ENCODE measurements at regions of chr4 and their contacts with region 1.

Region 1: GRCh38 chr4:113761620-113762185 is at the start of gene CAMK2D:
- DNase-seq: peak; percentile 96
- H3K4me3 Mint-ChIP-seq: peak within 1 kb of the TSS; percentile 95
- H3K27ac Mint-ChIP-seq: peak within 1 kb of the TSS; percentile 99
- H3K4me1 Mint-ChIP-seq: peaks cover 37% of the 10 kb centered on the region
- H3K27me3 Mint-ChIP-seq: no peaks in the 10 kb centered on the region
- total RNA-seq, gene CAMK2D: 75.7 to 78.3 TPM

Region 2: GRCh38 chr4:112284662-112285411 is 1476.9 kb before region 1 on chr4:
- CTCF ChIA-PET with region 1: no interaction called
- intact Hi-C with region 1: loop called (anchors 10 kb)
- DNase-seq: no peak
- H3K4me3 Mint-ChIP-seq: peak overlapping the region; percentile 97
- H3K27ac Mint-ChIP-seq: peak overlapping the region; percentile 97
- H3K4me1 Mint-ChIP-seq: peaks cover 72% of the 10 kb centered on the region
- H3K27me3 Mint-ChIP-seq: no peaks in the 10 kb centered on the region

Region 3: DNA sequence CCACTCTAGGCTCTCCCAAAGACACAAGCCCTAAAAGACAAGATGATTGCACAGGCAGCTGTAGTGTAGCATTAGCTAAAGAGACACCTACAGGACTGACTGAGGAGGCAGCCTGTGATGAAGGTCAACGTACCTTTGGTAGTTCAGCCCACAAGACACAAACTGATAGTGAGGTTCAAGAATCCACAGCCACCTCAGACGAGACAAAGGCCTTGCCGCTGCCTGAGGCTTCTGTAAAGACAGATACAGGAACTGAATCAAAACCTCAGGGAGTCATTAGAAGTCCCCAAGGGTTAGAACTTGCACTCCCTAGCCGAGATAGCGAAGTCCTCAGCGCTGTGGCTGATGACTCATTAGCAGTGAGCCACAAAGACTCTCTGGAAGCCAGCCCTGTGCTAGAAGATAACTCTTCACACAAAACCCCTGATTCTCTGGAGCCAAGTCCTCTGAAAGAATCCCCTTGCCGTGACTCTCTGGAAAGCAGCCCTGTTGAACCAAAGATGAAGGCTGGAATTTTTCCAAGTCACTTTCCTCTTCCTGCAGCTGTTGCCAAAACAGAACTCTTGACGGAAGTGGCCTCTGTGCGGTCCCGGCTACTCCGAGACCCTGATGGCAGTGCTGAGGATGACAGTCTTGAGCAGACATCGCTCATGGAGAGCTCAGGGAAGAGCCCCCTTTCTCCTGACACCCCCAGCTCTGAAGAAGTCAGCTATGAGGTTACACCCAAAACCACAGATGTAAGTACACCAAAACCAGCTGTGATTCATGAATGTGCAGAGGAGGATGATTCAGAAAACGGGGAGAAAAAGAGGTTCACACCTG is 405.9 kb before region 1 on chr4:
- CTCF ChIA-PET with region 1: no interaction called
- intact Hi-C with region 1: loop called (anchors 1 kb)
- DNase-seq: peak; percentile 91
- H3K4me3 Mint-ChIP-seq: peak overlapping the region; percentile 59
- H3K27ac Mint-ChIP-seq: peak overlapping the region; percentile 98
- H3K4me1 Mint-ChIP-seq: peaks cover 39% of the 10 kb centered on the region
- H3K27me3 Mint-ChIP-seq: peaks cover 42% of the 10 kb centered on the region

Region 4: DNA sequence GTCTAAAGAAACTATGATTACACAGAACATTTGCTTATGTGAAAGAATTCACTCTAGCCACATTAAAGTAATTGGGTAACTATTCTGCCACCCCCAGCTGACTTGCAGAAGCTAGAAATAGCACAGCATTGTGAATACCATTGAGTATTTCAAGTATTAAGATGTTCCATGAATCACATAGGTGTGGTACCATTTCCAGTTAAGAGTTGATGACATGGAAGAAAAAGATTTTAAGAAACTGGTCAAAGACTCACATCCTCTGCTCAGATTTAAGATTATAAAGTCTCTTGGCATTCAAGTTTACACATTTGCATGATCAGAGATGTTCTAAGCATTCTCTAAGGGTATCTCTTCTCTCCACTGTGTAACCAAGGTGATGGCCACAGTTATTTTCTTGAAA is 287.7 kb before region 1 on chr4:
- CTCF ChIA-PET with region 1: no interaction called
- intact Hi-C with region 1: loop called (anchors 1 kb)
- DNase-seq: peak; percentile 55
- H3K4me3 Mint-ChIP-seq: no peak overlapping the region
- H3K27ac Mint-ChIP-seq: peak overlapping the region; percentile 84
- H3K4me1 Mint-ChIP-seq: peaks cover 56% of the 10 kb centered on the region
- H3K27me3 Mint-ChIP-seq: no peaks in the 10 kb centered on the region

Region 5: DNA sequence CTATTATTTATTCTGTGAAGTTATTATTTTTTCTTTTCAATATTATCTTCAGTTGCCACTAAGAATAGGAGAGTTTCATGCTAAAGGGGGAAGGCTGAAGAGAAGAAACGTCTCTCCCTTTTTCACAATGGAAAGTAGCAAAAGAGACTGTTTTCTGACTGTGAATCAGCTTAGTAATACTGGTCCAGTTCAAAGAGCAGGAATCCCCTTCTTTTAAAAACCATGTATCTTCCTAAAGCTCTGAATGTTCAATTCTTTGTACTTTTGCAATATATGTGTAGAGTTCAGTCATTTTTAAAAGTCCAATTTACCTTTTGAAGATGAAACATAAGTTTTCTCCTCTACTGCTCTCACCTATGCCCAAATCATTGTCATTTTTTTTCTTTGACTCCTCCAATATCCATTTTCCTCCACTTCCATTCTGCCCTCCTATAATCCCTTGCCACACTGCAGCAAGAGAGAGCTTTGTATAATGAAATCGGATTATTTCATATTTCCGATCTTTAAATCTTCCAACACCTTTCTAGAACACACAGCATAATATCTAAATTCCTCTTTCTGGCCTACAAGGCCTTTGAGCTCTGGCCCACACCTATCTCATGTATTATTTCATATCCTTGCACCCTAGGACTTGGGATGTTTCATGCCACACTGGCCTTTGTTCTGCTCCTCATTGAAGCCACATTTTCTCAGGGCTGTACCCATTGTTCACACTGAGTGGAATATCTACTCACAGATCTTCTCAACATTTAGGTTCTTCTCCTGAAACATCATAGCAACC is 195.5 kb before region 1 on chr4:
- CTCF ChIA-PET with region 1: no interaction called
- intact Hi-C with region 1: loop called (anchors 1 kb)
- DNase-seq: no peak
- H3K4me3 Mint-ChIP-seq: no peak overlapping the region
- H3K27ac Mint-ChIP-seq: peak overlapping the region; percentile 15
- H3K4me1 Mint-ChIP-seq: peaks cover 40% of the 10 kb centered on the region
- H3K27me3 Mint-ChIP-seq: no peaks in the 10 kb centered on the region

Region 6: DNA sequence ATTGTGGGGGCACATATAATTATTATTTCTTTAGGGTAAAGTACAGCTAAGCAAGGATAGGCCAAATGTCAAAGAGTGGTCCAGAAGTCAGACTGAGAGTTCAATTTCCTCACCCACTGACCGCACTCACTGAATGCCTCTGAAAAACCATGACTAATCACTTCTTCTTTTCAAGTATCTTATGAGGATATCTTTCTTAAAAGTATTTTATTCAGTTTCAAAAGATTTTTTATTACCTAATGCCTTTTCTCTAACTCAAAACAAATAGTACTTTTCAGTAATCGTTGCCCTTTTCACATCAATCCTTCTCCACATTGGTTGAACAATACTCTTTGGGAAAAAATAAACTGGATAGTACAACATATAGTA is 61.6 kb after region 1 on chr4:
- CTCF ChIA-PET with region 1: interaction called, 3 read pairs
- intact Hi-C with region 1: loop called (anchors 1 kb)
- DNase-seq: no peak
- H3K4me3 Mint-ChIP-seq: no peak overlapping the region
- H3K27ac Mint-ChIP-seq: no peak overlapping the region
- H3K4me1 Mint-ChIP-seq: peaks cover 66% of the 10 kb centered on the region
- H3K27me3 Mint-ChIP-seq: no peaks in the 10 kb centered on the region